Cardiac septum (tissue), 1 donor: ENCODE measurements at regions of chr3 and their contacts with region 1.

Region 1: DNA sequence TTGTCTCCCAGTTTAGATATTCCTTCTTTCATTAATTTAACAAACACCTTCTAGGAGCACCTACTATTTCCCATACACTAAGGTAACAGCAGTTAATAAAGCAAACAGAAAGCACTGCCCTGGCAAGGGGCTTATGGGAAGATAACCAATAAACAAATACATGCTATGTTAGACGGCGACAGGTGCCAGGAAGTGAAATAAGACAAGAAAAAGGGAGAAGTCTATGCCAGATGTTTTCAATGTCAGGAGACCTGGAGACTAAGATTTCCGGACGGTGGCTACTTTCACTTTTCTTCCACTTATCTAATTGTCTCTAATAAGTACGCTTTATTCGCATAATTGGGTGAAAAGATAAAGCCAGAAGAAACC is 32.5 kb upstream of the ZNF445 start:
- DNase-seq: no peak

Region 2: GRCh38 chr3:44323341-44323955 is 186.5 kb before region 1 on chr3:
- intact Hi-C with region 1: loop called (anchors 2 kb)
- DNase-seq: no peak

Region 3: DNA sequence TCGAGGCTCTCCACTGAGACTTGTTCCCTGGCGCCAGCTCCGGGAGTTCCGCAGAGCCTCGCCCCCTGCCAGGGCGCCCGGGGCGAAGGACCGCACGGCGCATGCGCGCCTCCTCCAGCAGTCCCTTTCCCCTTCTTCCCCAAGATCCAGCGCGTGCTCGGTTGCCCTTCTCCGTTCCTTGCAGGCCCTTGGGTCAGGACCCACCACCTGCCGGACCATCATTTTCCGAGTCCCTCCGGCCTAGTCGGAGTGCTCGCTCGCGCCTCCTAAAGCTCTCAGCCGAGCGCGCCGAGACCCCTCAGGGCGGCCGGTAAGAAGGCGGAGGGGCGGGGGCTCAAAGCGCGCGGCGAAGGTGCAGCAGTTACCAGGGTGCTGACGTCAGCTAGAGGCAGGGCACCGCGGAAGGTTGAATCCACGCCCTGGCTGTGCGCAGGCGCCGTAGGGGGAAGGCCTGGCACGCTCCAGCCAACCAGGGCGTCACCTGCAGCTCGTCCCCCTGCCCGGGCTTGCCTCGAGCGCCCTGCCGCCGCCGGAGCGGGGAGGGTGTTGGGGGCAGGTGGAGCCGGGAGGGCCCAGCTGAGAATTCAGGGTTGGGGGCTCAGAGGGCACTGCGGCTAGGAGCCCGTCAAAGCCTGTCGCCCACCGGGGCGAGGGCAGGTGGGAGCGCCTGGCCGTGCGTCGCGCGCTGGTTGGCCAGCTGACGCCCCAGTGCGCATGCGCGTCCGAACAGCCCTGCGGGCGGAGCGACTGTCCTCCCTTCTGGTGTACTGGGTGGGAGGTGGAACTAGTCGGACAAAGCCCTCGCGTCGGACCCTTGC is 171.8 kb before region 1 on chr3 and contains the start of gene TCAIM:
- intact Hi-C with region 1: loop called (anchors 5 kb)
- DNase-seq: peak; percentile 99
- total RNA-seq, gene TCAIM: 36.5 TPM

Region 4: DNA sequence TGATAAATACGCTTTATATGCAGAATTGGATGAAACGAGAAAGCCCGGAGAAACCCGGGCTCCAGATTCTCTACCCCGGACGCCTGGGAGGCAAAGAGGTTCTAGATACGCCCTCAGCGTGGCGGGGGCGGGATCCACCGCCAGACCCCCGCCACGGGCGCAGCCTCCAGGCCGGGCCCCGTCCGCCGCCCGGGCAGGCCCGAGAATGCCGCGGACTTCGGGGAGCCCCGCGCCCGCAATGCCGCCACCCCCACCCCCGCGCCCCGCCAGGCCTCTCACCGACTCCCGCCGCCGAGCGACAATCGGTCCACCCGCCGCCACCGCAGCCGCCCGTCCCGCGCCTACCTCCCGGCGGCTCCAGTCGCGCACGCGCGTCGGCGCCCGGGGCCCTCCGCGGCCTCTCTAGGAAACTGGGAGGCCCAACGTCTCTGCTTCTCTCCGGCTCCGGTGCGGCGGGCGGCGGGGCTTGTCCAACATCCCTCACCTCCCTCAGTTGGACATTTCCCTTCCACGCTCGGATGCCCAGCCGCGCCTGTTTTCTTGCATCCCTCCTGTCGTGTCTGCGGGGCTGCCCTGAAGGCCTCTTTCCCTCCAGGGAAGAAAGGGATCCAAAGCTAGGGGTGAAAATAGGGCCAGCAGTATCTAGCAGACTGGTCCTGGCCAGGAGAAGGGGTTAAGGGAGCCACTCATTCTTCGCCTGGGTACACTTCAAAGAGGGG is 32.5 kb before region 1 on chr3 and contains the start of gene ZNF445:
- intact Hi-C with region 1: loop called (anchors 2 kb)
- DNase-seq: peak; percentile 94
- total RNA-seq, gene ZNF445: 16.7 TPM